Activated B cell treated with CpG ODN at 0.5 μM for 24 hours (primary cell): ENCODE measurements at regions of chr2 and their contacts with region 1.

Region 1: DNA sequence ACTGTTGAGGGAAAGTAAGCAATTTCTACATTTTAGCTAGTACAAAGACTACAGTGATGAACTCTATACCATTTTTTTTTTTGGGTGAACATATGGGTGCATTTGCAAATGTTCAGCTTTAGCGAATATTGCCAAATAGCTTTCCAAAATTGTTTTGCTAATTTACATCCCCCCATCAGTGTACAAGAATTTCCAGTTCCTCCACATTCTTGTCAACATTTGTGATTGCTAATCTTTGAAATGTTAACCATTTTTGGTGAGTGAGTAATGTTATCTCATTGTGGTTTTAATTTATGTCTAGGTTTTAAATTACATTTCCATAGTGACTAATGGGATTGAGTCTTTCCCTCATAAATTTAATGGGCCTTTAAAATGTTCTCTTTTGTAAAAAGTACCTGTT is 16.4 kb upstream of the CNRIP1 start:
- DNase-seq: no peak
- ATAC-seq: no peak
- H3K4me3 Mint-ChIP-seq: no peak overlapping the region
- H3K27ac Mint-ChIP-seq: no peak overlapping the region
- H3K4me1 Mint-ChIP-seq: no peaks in the 10 kb centered on the region
- H3K27me3 Mint-ChIP-seq: peaks cover 6% of the 10 kb centered on the region
- CTCF ChIP-seq: no peak

Region 2: DNA sequence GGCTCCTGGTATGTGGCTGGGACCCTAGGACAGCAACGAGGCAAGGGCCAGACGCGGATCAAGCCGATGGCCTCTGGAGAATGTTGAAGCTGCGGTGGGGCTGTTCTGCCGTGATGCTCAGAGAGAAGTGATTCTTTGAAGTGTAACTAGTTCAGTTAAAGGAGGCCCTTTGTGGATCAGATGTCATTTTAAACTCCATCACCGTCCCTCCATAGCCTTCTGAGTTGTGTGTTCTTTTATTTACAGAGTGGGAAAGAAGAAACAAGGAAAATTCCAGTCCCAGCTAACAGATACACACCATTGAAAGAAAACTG is 178.1 kb before region 1 on chr2:
- CTCF ChIA-PET with region 1: no interaction called
- POLR2A ChIA-PET with region 1: no interaction called
- intact Hi-C with region 1: no loop called
- DNase-seq: no peak
- ATAC-seq: no peak
- H3K4me3 Mint-ChIP-seq: peak overlapping the region; percentile 99
- H3K27ac Mint-ChIP-seq: peak overlapping the region; percentile 100
- H3K4me1 Mint-ChIP-seq: peaks cover 50% of the 10 kb centered on the region
- H3K27me3 Mint-ChIP-seq: no peaks in the 10 kb centered on the region
- CTCF ChIP-seq: no peak

Region 3: GRCh38 chr2:68352651-68353391 is 16.6 kb after region 1 on chr2:
- CTCF ChIA-PET with region 1: no interaction called
- POLR2A ChIA-PET with region 1: interaction called, 3 read pairs
- intact Hi-C with region 1: loop called (anchors 2 kb)
- DNase-seq: no peak
- ATAC-seq: no peak
- H3K4me3 Mint-ChIP-seq: no peak overlapping the region
- H3K27ac Mint-ChIP-seq: no peak overlapping the region
- H3K4me1 Mint-ChIP-seq: peaks cover 4% of the 10 kb centered on the region
- H3K27me3 Mint-ChIP-seq: no peaks in the 10 kb centered on the region
- CTCF ChIP-seq: no peak

Region 4: DNA sequence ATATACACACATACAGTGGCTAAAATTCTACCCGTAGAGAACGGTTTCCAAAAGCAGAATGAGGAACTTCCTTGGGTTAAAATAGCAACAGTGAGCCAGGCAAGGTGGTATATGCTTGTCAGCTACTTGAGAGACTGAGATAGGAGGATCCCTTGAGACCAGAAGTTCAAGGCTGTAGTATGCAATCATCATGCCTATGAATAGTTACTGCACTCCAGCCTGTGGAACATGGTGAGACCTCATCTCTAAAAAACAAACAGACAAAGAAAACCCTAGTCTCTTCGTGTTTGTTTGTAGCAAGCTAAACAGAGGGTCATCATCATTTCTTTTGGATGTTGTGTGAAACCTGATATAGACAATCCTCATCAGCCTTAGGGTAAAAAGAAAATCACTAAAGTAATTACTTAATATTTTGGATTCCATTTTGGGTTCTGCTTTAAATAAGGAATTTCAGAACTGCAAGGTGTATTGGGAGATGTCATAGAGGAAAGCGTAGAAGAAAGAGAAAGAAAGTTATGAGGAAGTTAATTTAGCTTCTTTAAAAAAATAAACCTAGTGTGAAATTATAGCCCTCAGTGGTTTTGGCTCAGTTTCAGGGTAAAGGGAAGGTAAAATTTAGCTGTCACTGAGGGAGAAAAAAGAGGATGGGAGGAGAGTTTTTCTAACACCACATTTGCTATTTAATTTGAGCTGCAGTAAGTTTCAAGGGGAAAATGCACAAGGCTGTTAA is 75.4 kb after region 1 on chr2:
- CTCF ChIA-PET with region 1: no interaction called
- POLR2A ChIA-PET with region 1: no interaction called
- intact Hi-C with region 1: no loop called
- DNase-seq: no peak
- ATAC-seq: peak; percentile 98
- H3K4me3 Mint-ChIP-seq: peak overlapping the region; percentile 78
- H3K27ac Mint-ChIP-seq: peak overlapping the region; percentile 93
- H3K4me1 Mint-ChIP-seq: peaks cover 97% of the 10 kb centered on the region
- H3K27me3 Mint-ChIP-seq: no peaks in the 10 kb centered on the region
- CTCF ChIP-seq: no peak

Region 5: DNA sequence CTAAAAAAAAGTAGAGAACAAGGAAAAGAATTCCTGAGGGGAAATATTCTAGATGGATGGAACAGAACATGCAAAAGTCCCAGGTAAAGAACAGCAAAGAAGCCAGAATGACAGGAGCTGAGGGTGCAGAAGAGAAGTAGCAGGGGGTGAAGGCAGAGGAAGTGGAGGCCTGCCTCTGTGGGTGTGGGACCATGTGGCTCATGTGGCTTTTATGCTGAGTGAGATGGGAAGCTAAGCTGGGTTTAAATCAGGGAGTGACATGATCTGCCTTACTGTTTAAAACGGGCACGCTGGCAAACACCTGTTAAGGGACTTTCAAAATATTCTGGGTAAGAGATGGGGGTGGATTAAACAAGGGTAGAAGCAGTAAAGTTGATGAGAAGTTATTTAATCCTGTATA is 576.5 kb after region 1 on chr2:
- CTCF ChIA-PET with region 1: no interaction called
- POLR2A ChIA-PET with region 1: no interaction called
- intact Hi-C with region 1: no loop called
- DNase-seq: no peak
- ATAC-seq: no peak
- H3K4me3 Mint-ChIP-seq: no peak overlapping the region
- H3K27ac Mint-ChIP-seq: no peak overlapping the region
- H3K4me1 Mint-ChIP-seq: peaks cover 21% of the 10 kb centered on the region
- H3K27me3 Mint-ChIP-seq: no peaks in the 10 kb centered on the region
- CTCF ChIP-seq: no peak

Region 6: GRCh38 chr2:70258532-70258874 is 1922.3 kb after region 1 on chr2:
- CTCF ChIA-PET with region 1: no interaction called
- POLR2A ChIA-PET with region 1: no interaction called
- intact Hi-C with region 1: no loop called
- DNase-seq: no peak
- ATAC-seq: no peak
- H3K4me3 Mint-ChIP-seq: peak overlapping the region; percentile 93
- H3K27ac Mint-ChIP-seq: peak overlapping the region; percentile 12
- H3K4me1 Mint-ChIP-seq: peaks cover 13% of the 10 kb centered on the region
- H3K27me3 Mint-ChIP-seq: no peaks in the 10 kb centered on the region
- CTCF ChIP-seq: no peak